PC-9 (cell line): ENCODE measurements at regions of chr12 and their contacts with region 1.

Region 1: DNA sequence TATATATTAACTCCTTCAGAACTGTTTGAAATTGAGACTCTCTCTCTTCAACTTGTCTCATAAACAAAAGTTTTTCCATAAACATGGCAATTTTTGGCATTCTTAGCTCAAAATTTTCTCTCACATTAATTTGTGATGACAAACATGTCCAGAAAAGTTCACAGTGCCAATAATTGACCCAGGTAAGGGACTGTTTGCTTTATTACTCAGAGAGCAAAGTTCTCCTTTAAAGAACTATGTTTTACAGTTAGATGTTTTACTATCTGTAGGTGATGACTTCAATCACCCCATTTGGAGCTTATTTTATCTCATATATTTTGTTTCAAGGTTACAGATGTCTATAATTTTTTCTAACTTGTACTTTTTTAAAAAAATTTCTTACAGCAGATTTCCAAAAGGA is 855.6 kb downstream of the SLC16A7 start:
- DNase-seq: no peak
- H3K4me3 ChIP-seq: no peak overlapping the region
- H3K27ac ChIP-seq: no peak overlapping the region
- H3K4me1 ChIP-seq: no peaks in the 10 kb centered on the region
- H3K27me3 ChIP-seq: no peaks in the 10 kb centered on the region
- CTCF ChIP-seq: no peak

Region 2: DNA sequence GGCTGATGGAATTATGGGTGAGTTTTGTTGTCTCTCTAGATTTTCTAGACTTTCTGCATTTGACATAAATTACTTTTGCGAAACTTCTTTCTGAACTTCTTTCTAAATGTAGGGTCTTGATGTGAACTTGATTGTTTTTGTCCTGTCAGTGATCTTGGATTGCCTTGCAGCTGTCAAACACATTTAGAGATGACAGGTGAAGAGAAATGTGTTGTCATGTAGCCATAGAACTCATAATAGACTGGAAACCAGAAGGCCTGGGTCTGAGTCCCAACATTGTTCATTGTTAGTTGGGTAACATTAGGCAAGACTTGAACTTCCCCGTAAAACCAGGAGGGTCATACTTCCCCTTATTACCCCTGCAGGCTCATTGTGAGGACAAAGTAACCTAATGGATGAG is 1640.1 kb before region 1 on chr12:
- CTCF ChIA-PET with region 1: no interaction called
- POLR2A ChIA-PET with region 1: interaction called, 17 read pairs
- intact Hi-C with region 1: no loop called
- DNase-seq: no peak
- H3K4me3 ChIP-seq: no peak overlapping the region
- H3K27ac ChIP-seq: no peak overlapping the region
- H3K4me1 ChIP-seq: no peaks in the 10 kb centered on the region
- H3K27me3 ChIP-seq: no peaks in the 10 kb centered on the region
- CTCF ChIP-seq: no peak

Region 3: DNA sequence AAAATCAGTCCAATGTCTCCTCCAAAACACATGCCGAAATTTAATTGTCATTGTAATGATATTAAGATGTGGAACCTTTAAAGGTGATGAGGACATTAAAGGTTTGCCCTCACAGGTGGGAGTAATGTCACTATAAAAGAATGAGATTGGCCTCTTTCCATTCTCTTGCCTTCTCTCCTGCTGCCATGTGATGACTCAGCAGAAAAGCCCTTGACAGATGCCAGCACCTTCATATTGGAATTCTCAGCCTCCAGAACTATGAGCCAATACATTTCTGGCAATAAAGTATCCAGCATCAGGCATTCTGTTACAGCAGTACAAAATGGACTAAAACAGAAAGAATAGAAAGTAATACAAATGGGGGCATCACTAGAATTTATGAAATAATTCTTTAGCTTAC is 246.0 kb before region 1 on chr12:
- CTCF ChIA-PET with region 1: no interaction called
- POLR2A ChIA-PET with region 1: no interaction called
- intact Hi-C with region 1: no loop called
- DNase-seq: peak in 1 of 2 experiments; percentile 3
- H3K4me3 ChIP-seq: no peak overlapping the region
- H3K27ac ChIP-seq: no peak overlapping the region
- H3K4me1 ChIP-seq: peaks cover 5% of the 10 kb centered on the region; the same call in 1 of the 2 replicates
- H3K27me3 ChIP-seq: no peaks in the 10 kb centered on the region
- CTCF ChIP-seq: no peak

Region 4: GRCh38 chr12:60684988-60685655 is 233.7 kb after region 1 on chr12:
- CTCF ChIA-PET with region 1: no interaction called
- POLR2A ChIA-PET with region 1: no interaction called
- intact Hi-C with region 1: loop called (anchors 5 kb)
- DNase-seq: peak in 1 of 2 experiments; percentile 50
- H3K4me3 ChIP-seq: no peak overlapping the region
- H3K27ac ChIP-seq: no peak overlapping the region
- H3K4me1 ChIP-seq: no peaks in the 10 kb centered on the region
- H3K27me3 ChIP-seq: no peaks in the 10 kb centered on the region
- CTCF ChIP-seq: no peak